GM18951 (cell line): ENCODE measurements at regions of chr12 and their contacts with region 1.

Region 1: GRCh38 chr12:538731-539539 is 79.2 kb downstream of the B4GALNT3 start:
- POLR2A ChIP-seq: no peak

Region 2: DNA sequence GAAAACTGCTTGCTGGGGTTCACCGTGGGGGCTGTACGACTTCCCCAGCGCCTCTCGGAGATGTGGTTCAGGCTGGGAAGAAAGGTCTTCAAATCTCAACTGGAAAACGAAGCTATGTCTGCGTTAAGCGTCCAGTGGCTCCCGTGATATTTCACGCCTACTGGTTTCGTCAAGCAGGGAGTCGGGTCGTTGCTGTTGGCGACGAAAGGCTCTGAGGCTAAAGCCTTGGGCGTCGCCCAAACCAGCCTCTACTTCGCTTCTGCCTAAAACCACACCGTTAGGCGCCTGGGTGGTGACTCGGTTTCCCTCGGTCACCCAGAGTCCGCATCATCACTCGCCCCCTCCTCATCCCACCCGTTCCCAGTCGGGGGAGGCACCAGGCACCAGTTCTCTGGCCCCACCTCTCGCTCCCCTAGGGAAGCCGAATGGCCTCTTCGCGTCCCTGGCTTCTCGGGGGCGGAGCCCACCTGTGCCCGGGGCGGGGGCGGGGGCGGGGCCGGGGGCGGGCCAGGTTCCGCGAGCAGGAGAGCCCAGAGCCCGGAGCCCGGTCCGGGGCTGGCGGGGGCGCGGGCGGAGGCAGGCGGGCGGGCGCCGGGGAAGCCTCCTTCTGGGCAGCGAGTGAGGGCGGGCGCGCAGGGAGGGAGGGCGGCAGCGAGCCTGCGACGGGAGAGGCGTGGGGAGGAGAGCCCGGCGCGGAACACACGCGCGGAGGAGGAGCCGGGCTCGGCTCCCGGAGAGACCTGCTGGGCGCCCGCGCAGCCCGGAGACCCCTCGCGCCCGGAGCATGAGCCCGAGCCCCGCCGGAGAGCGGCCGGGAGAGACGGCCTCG is 79.3 kb before region 1 on chr12 and contains the start of gene B4GALNT3:
- in situ Hi-C with region 1: loop called (anchors 5 kb)
- POLR2A ChIP-seq: no peak